PC-3 (cell line): ENCODE measurements at regions of chr1 and their contacts with region 1.

Region 1: GRCh38 chr1:214551436-214552173 is at the start of gene PTPN14:
- DNase-seq: peak; percentile 99
- ATAC-seq: peak; percentile 71
- H3K4me3 ChIP-seq: peak within 1 kb of the TSS; percentile 88
- H3K27ac ChIP-seq: peak within 1 kb of the TSS; percentile 95
- H3K4me1 ChIP-seq: peaks cover 39% of the 10 kb centered on the region
- H3K27me3 ChIP-seq: no peaks in the 10 kb centered on the region
- CTCF ChIP-seq: peak; percentile 52; the same call in 1 of the 2 replicates
- total RNA-seq, gene PTPN14: 12.6 and 17.1 TPM in 2 replicates

Region 2: GRCh38 chr1:214386747-214387146 is 164.9 kb before region 1 on chr1:
- CTCF ChIA-PET with region 1: no interaction called
- POLR2A ChIA-PET with region 1: no interaction called
- intact Hi-C with region 1: loop called (anchors 2 kb)
- DNase-seq: peak; percentile 17
- ATAC-seq: peak; percentile 83
- H3K4me3 ChIP-seq: no peak overlapping the region
- H3K27ac ChIP-seq: no peak overlapping the region
- H3K4me1 ChIP-seq: no peaks in the 10 kb centered on the region; the same call in 1 of the 2 replicates
- H3K27me3 ChIP-seq: no peaks in the 10 kb centered on the region
- CTCF ChIP-seq: no peak

Region 3: DNA sequence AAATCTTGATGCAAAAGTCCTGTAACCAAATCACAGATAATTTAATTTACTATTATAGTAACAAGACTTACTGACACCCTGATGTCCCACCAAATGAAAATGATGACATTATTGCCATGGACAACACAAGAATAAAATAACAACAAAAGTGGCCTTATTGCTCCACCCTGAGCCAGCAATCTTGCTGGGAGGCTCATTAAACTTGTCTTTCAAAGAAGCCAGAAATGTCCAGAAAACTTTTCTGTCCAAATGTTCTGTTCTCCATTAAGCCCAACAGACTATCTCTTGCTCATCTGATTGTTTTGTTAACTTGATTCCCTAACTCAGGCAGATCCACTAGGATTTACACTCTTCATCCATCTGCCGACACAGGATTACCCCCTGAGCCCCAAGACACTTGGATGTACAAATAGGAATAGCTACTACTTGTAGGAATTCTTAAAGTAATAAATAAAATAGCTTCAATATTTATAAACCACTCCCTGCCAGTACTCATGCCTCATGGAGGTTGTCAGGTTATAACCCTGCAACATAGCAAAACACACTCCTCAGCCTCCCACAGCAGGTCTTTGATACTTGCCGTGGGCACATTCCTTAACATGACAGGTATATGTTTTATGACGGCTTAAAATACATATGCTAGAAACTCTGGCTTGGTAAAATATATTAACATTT is 85.1 kb before region 1 on chr1:
- CTCF ChIA-PET with region 1: no interaction called
- POLR2A ChIA-PET with region 1: interaction called, 5 read pairs
- intact Hi-C with region 1: loop called (anchors 5 kb)
- DNase-seq: peak; percentile 81
- ATAC-seq: peak; percentile 58
- H3K4me3 ChIP-seq: peak overlapping the region; percentile 0; the same call in 1 of the 2 replicates
- H3K27ac ChIP-seq: peak overlapping the region; percentile 30
- H3K4me1 ChIP-seq: peaks cover 29% of the 10 kb centered on the region
- H3K27me3 ChIP-seq: no peaks in the 10 kb centered on the region
- CTCF ChIP-seq: no peak

Region 4: DNA sequence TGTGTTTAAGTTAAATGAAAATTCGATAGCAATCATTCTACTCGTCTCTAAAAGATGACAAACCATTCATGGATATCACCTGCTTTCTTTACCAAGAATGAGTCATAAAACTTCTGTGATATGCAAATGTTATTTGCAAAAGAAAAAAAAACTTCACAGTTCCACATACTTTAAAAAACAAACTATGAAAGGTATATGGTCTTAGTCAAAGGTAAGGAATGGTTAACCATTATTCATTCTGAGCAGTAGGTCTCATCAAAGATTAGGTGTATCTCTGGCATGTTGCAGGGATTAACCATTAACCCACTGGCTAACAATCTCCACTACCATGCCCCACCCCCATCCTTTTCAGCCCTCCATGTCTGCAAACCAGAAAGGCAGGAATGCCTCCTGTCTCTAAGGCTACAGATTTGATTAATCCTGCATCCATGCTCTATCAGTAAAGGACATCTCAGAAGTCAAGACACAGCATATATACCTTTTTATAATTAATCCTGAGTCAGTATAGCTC is 44.6 kb before region 1 on chr1:
- CTCF ChIA-PET with region 1: interaction called, 3 read pairs
- POLR2A ChIA-PET with region 1: interaction called, 13 read pairs
- intact Hi-C with region 1: loop called (anchors 2 kb)
- DNase-seq: peak; percentile 94
- ATAC-seq: peak; percentile 53
- H3K4me3 ChIP-seq: peak overlapping the region; percentile 42
- H3K27ac ChIP-seq: peak overlapping the region; percentile 19; the same call in 1 of the 2 replicates
- H3K4me1 ChIP-seq: peaks cover 42% of the 10 kb centered on the region
- H3K27me3 ChIP-seq: no peaks in the 10 kb centered on the region
- CTCF ChIP-seq: no peak

Region 5: DNA sequence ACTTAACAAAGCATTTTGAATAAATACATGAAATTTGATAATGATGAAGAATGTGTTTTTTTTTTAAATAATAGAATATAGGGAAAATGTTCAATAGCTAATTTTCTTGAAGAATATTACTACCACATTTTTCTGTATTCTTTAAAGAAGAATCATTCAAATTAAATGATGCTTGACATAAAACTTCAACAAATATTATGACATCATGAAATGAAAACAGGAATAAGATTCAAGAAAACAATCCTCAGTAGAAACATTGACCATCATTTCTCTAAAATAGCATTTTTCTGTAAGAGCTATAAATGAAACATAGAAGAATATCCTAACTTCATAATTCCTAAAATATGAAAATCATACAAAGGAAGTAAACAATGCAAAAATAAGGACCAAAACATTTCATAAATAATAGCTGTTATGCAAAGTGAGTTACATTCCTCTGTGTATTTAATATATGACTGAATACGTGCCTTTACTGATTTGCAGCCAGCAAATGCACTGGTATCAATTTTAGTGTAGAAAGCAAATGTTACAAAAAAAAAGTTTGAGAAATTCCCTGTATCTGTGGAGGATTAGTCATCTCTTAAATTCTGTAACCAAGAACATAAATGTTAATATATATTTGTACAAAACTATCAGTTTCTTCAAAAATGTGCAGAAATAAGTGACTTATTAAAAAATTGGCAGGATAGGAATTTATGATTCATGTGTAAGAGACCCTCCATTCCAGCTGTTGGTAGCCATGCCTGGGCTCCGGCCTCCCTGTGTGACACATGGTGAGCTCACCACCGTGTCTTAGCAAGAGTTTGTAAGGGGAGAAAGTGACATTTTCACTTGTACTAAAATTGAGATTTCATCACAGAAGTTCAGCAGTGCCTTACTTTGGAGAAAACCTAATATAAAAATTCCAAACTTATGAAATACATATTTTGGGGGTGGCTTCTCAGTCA is 14.8 kb after region 1 on chr1:
- CTCF ChIA-PET with region 1: interaction called, 3 read pairs
- POLR2A ChIA-PET with region 1: interaction called, 11 read pairs
- intact Hi-C with region 1: loop called (anchors 1 kb)
- DNase-seq: peak; percentile 96
- ATAC-seq: peak; percentile 64
- H3K4me3 ChIP-seq: peak overlapping the region; percentile 6; the same call in 1 of the 2 replicates
- H3K27ac ChIP-seq: peak overlapping the region; percentile 86
- H3K4me1 ChIP-seq: peaks cover 64% of the 10 kb centered on the region
- H3K27me3 ChIP-seq: no peaks in the 10 kb centered on the region
- CTCF ChIP-seq: no peak

Region 6: GRCh38 chr1:214660862-214661261 is 109.3 kb after region 1 on chr1:
- CTCF ChIA-PET with region 1: no interaction called
- POLR2A ChIA-PET with region 1: no interaction called
- intact Hi-C with region 1: no loop called
- DNase-seq: peak; percentile 31
- ATAC-seq: peak; percentile 51; the same call in 1 of the 2 replicates
- H3K4me3 ChIP-seq: no peak overlapping the region
- H3K27ac ChIP-seq: no peak overlapping the region
- H3K4me1 ChIP-seq: no peaks in the 10 kb centered on the region
- H3K27me3 ChIP-seq: no peaks in the 10 kb centered on the region
- CTCF ChIP-seq: peak; percentile 53

Region 7: DNA sequence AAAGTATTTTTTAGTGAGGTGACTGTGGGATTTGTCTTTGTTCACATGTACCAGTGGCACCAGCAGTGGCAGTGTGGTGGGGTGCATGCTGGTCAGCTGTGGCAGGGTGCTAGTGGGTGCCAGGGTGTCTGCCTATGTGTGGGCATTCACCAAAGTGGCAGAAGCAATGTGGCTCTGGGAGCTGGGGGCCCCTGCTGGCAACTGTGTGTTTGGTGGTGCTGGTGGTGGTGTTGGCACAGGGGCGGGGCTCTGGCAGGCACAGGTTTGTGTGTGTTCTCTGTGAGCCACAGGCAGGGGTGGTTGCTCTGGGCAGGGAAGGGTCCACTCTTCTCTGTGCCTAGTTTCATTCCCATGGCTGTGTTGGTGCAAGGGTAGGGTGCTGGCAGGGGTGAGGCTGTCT is 212.9 kb after region 1 on chr1:
- CTCF ChIA-PET with region 1: no interaction called
- POLR2A ChIA-PET with region 1: no interaction called
- intact Hi-C with region 1: no loop called
- DNase-seq: no peak
- ATAC-seq: no peak
- H3K4me3 ChIP-seq: no peak overlapping the region
- H3K27ac ChIP-seq: no peak overlapping the region
- H3K4me1 ChIP-seq: no peaks in the 10 kb centered on the region
- H3K27me3 ChIP-seq: no peaks in the 10 kb centered on the region
- CTCF ChIP-seq: no peak

Region 8: DNA sequence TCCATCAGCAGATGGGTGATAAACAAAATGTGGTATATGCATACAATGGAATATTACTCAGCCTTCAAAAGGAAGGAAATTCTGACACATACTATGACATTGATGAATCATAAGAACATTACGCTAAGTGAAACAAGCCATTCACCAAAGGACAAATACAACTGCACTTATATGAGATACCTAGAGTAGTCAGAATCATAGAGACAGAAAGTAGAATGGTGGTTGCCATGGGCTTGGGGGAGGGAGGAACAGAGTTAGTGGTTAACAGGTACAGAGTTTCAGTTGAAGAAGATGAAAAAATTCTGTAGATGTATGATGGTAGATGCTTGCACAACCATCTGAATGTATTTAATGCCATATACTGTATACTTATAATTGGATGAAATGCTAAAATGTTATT is 491.8 kb after region 1 on chr1:
- CTCF ChIA-PET with region 1: no interaction called
- POLR2A ChIA-PET with region 1: no interaction called
- intact Hi-C with region 1: no loop called
- DNase-seq: no peak
- ATAC-seq: no peak
- H3K4me3 ChIP-seq: no peak overlapping the region
- H3K27ac ChIP-seq: no peak overlapping the region
- H3K4me1 ChIP-seq: no peaks in the 10 kb centered on the region
- H3K27me3 ChIP-seq: peaks cover 5% of the 10 kb centered on the region; the same call in 1 of the 2 replicates
- CTCF ChIP-seq: no peak